ENCODE measurements at regions of chr21 and their contacts with region 1.

Region 1: DNA sequence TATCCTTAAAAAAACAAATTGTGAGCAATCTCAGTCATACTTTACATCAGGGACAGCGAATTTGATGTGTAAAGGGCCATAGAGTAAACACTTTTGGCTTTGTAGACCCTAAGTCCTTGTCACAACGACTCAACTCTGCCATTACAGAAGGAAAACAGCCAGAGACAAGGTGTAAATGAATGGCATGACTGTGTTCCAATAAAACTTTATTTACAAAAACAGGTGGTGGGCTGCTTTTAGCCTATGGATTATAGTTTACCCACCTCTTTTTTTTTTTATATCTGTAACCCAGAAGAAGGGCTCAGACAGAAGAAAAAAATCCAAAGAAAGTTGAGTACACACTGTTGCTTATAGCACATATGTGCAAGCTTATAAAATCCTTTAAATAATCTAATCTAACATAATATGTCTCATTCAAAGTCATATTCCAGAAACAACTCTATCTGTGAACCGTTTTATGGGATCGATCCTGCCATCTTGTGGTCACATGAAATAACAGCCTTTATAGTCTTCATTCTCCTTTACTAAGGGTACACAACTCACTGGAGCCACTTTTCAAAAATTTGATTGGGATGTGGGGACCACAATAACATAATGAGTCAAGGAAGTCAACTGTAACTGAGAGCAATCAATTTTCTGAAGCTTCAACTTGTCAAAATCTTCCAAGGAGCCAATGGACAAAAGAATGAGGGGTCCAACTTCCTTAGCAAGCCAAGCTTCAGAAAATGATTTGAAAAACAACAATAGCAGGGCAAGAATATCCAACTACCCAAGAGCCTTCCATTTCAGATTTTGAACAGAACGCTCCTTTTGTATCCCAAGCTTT is 142.2 kb upstream of the KRTAP19-8 start:
- DNase-seq: no peak
- ATAC-seq: peak; percentile 24 to 57
- H3K4me3 ChIP-seq: no peak overlapping the region
- H3K27ac ChIP-seq: no peak overlapping the region
- H3K4me1 ChIP-seq: peaks cover 2% of the 10 kb centered on the region
- H3K27me3 ChIP-seq: no peaks in the 10 kb centered on the region

Region 2: DNA sequence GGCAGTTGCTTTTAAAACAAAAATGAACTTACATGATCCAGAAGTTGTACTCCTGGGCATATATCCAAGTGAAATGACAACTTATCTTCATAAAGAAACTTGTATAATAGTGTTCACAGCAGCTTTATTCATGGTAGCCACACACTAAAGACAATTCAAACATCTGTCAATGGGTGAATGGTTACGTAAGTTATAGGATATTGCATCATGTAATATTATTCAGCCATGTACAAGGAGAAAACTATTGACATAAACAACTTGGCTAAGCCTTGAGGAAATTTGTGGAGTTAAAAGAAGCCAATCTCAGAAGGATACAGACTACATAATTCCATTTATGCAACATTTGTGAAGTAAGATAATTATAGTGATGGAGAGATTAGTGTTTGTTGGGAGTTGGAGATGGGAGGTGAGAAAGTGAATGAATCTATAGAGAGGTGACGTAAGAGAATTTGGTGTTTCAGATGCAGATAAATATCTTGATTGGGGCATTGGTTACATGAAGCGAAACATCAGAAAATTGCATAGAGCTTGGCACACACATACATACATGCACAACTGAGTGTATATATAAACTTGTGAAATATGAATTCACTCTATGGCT is 1190.7 kb before region 1 on chr21:
- intact Hi-C with region 1: no loop called
- DNase-seq: no peak
- ATAC-seq: no peak
- H3K4me3 ChIP-seq: no peak overlapping the region
- H3K27ac ChIP-seq: no peak overlapping the region
- H3K4me1 ChIP-seq: no peaks in the 10 kb centered on the region
- H3K27me3 ChIP-seq: no peaks in the 10 kb centered on the region

Region 3: DNA sequence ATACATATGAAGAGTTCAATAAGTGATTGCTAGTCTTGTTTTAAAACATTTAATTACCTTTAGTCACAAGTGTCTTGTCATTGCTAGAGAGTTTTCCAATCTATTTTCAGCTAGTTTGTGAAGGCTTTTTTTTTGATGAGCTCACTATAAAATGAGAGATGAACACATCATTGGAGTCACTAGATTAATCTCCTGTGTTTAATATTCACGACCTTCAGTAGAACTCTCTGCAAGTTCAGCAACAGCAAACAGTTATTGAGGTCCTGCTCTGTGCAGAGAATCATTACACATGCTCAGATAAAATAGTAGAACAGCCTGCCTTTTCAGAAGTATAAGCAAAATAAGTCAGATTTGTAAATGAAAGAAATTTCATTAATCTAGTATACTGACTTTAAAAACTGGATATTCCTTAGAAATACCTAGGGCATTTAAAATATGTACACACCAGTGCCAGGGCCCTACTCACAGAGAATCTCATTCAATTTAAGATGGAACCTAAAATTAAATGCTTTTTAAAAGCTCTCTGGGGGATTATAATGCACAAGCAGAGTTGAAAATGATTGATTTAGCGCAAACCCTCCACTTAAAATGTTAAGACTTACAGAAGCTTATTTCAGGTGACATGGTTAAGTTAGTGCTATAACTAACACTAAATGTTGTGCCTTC is 507.4 kb before region 1 on chr21:
- intact Hi-C with region 1: no loop called
- DNase-seq: no peak
- ATAC-seq: no peak
- H3K4me3 ChIP-seq: no peak overlapping the region
- H3K27ac ChIP-seq: no peak overlapping the region
- H3K4me1 ChIP-seq: no peaks in the 10 kb centered on the region
- H3K27me3 ChIP-seq: no peaks in the 10 kb centered on the region

Region 4: GRCh38 chr21:31098576-31099005 is 81.9 kb before region 1 on chr21:
- intact Hi-C with region 1: loop called in 3 of 4 experiments (anchors 2 to 5 kb)
- DNase-seq: peak; percentile 75 to 90 (median 84)
- ATAC-seq: peak; percentile 76 to 80
- H3K4me3 ChIP-seq: no peak overlapping the region
- H3K27ac ChIP-seq: no peak overlapping the region
- H3K4me1 ChIP-seq: peaks cover 1% of the 10 kb centered on the region
- H3K27me3 ChIP-seq: no peaks in the 10 kb centered on the region

Region 5: DNA sequence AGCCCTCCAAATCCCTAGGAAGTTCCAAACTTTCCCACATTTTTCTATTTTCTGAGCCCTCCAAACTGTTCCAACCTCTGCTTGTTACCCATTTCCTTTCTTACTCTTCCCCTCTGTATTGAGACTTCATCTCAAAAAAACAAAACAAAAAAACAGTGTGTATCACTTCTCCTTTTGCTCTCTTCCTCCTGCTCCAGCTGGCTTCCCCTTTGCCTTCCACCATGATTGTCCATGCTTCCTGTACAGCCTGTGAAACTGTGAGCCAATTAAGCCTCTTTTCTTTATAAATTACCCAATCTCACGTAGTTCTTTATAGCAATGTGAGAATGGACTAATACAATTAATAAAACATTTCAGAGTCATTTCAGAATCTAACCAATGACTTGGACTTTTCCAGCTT is 72.6 kb before region 1 on chr21:
- intact Hi-C with region 1: loop called in 1 of 4 experiments (anchors 5 kb)
- DNase-seq: no peak
- ATAC-seq: peak in 1 of 2 donors; percentile 51
- H3K4me3 ChIP-seq: no peak overlapping the region
- H3K27ac ChIP-seq: no peak overlapping the region
- H3K4me1 ChIP-seq: no peaks in the 10 kb centered on the region
- H3K27me3 ChIP-seq: no peaks in the 10 kb centered on the region